ENCODE measurements at regions of chr7 and their contacts with region 1.

Region 1: GRCh38 chr7:151459726-151460473 is 20.0 kb upstream of the CRYGN start:
- DNase-seq: peak; percentile 51
- H3K4me3 Mint-ChIP-seq: peak overlapping the region; percentile 53
- H3K27ac Mint-ChIP-seq: peak overlapping the region; percentile 50
- H3K4me1 Mint-ChIP-seq: peaks cover 20% of the 10 kb centered on the region
- H3K27me3 Mint-ChIP-seq: no peaks in the 10 kb centered on the region
- CTCF ChIP-seq: no peak

Region 2: DNA sequence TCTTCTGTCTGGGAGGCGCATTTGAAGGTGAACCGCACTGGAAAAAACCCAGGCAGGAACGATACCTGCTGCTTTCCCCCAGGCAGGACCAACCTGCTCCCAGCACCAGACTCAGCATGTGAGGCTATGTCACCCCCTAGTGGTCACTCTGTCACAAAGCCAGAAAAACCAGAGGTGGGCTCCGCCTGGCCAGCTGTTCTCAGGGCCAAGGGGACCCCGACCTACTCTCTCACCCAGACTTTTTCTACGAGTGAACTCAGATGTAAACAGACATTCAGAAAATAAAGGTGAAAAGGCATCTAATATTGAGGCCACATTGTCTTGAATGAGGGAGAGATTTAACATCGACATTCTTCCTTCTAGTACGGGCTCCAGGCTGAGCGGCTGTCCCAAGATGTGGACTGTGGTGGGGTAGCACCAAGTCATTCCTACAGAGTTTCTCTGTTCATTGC is 299.7 kb after region 1 on chr7:
- CTCF ChIA-PET with region 1: no interaction called
- intact Hi-C with region 1: loop called (anchors 5 kb)
- DNase-seq: peak; percentile 80
- H3K4me3 Mint-ChIP-seq: no peak overlapping the region
- H3K27ac Mint-ChIP-seq: no peak overlapping the region
- H3K4me1 Mint-ChIP-seq: peaks cover 36% of the 10 kb centered on the region
- H3K27me3 Mint-ChIP-seq: no peaks in the 10 kb centered on the region
- CTCF ChIP-seq: peak; percentile 93

Measured in Calu3 (cell line).